Natural killer cell (primary cell): ENCODE measurements at regions of chr21 and their contacts with region 1.

Region 1: GRCh38 chr21:36330904-36331303 is 10.9 kb downstream of the MORC3 start:
- DNase-seq: peak; percentile 41 to 78
- ATAC-seq: peak; percentile 89 to 98 (median 92)
- H3K4me3 ChIP-seq: no peak overlapping the region
- H3K4me3 Mint-ChIP-seq: peak overlapping the region; percentile 47
- H3K27ac ChIP-seq: no peak overlapping the region
- H3K27ac Mint-ChIP-seq: peak overlapping the region; percentile 77 to 84
- H3K4me1 ChIP-seq: peaks cover 23% of the 10 kb centered on the region
- H3K4me1 Mint-ChIP-seq: peaks cover 33 to 43% of the 10 kb centered on the region in 2 donors
- H3K27me3 ChIP-seq: no peaks in the 10 kb centered on the region
- H3K27me3 Mint-ChIP-seq: no peaks in the 10 kb centered on the region
- CTCF ChIP-seq: peak; percentile 88

Region 2: GRCh38 chr21:36141513-36141925 is 189.4 kb before region 1 on chr21:
- intact Hi-C with region 1: loop called (anchors 1 kb)
- DNase-seq: peak; percentile 64 to 94
- ATAC-seq: peak; percentile 94 to 97 (median 95)
- H3K4me3 ChIP-seq: no peak overlapping the region
- H3K4me3 Mint-ChIP-seq: no peak overlapping the region
- H3K27ac ChIP-seq: no peak overlapping the region
- H3K27ac Mint-ChIP-seq: no peak overlapping the region
- H3K4me1 ChIP-seq: peaks cover 18% of the 10 kb centered on the region
- H3K4me1 Mint-ChIP-seq: peaks cover 5 to 8% of the 10 kb centered on the region in 2 donors
- H3K27me3 ChIP-seq: no peaks in the 10 kb centered on the region
- H3K27me3 Mint-ChIP-seq: no peaks in the 10 kb centered on the region
- CTCF ChIP-seq: peak; percentile 94

Region 3: DNA sequence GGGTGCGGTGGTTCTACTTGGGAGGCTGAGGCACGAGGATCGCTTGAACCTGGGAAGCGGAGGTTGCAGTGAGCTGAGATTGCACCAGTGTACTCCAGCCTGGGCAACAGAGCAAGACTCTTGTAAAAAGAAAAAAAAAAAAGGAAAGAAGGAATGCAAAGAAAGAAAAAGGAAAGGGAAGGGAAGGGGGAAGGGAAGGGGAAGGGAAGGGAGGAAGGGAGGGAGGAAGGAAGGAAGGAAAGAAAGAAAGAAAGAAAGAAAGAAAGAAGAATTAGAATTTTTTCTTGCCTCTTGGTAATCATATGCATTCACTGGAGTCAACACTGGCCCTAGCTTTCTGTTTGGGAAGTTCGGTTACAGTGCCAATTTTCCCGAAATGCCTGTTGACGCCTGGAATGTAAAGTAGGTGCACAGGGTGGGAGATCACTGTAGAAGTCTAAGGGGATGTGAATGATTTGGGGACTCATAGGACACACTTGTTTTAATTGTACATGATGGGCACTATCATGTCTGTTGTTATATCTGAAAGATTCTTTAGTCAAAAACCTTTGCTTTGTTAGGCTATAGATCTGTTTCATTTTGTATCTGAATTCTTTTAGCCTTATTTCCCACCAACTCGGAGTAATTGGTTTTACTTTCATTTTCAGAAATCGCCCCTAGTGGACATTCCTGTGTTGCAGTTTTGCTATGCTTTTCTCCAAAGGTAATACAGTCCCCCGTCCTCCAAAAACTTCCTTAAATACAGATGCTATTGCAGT is 70.7 kb before region 1 on chr21:
- intact Hi-C with region 1: loop called (anchors 1 kb)
- DNase-seq: peak in 1 of 2 donors; percentile 83
- ATAC-seq: peak; percentile 81 to 97 (median 93)
- H3K4me3 ChIP-seq: peak overlapping the region; percentile 43
- H3K4me3 Mint-ChIP-seq: peak overlapping the region; percentile 80
- H3K27ac ChIP-seq: peak overlapping the region; percentile 83
- H3K27ac Mint-ChIP-seq: peak overlapping the region; percentile 90 to 94
- H3K4me1 ChIP-seq: peaks cover 11% of the 10 kb centered on the region
- H3K4me1 Mint-ChIP-seq: peaks cover 12 to 13% of the 10 kb centered on the region in 2 donors
- H3K27me3 ChIP-seq: no peaks in the 10 kb centered on the region
- H3K27me3 Mint-ChIP-seq: no peaks in the 10 kb centered on the region
- CTCF ChIP-seq: peak; percentile 85

Region 4: DNA sequence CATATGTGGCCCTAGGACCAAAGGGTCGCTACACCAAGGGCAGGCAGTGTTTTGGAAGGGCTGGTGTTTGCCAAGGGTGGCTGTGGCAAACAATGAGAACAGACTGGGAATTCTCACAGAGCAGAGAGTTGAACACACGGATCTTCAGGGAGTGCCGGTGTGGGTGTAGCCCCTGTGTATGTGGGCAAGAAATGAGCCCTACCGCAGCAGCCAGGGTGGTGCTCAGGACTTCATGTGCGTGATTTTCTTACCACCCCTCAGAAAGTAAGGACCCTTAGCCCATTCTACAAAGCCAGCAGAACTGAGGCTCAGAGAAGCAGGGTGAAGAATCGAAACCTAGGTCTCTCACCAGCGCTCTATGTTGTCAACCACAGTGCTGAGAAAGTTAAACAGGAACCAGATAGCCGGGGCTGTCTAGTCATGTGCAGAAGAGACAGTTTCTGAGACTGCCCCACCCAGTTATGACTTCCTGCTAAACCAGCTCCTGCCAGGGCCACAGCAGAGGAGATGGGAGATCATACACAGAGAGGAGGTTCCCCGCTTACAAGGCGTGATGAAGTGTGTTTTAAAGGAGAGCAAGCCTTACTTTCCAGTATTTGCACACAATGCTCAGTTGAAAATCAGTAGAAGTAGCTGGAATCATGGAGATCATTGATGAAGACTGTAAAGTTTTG is 32.8 kb before region 1 on chr21:
- intact Hi-C with region 1: loop called (anchors 2 kb)
- DNase-seq: peak; percentile 64 to 91
- ATAC-seq: peak; percentile 96 to 99 (median 99)
- H3K4me3 ChIP-seq: peak overlapping the region; percentile 23
- H3K4me3 Mint-ChIP-seq: peak overlapping the region; percentile 77
- H3K27ac ChIP-seq: peak overlapping the region; percentile 89
- H3K27ac Mint-ChIP-seq: peak overlapping the region; percentile 96 to 99
- H3K4me1 ChIP-seq: peaks cover 38% of the 10 kb centered on the region
- H3K4me1 Mint-ChIP-seq: peaks cover 26 to 31% of the 10 kb centered on the region in 2 donors
- H3K27me3 ChIP-seq: no peaks in the 10 kb centered on the region
- H3K27me3 Mint-ChIP-seq: no peaks in the 10 kb centered on the region
- CTCF ChIP-seq: no peak

Region 5: GRCh38 chr21:36615274-36615964 is 284.5 kb after region 1 on chr21:
- intact Hi-C with region 1: no loop called
- DNase-seq: no peak
- ATAC-seq: no peak
- H3K4me3 ChIP-seq: no peak overlapping the region
- H3K4me3 Mint-ChIP-seq: no peak overlapping the region
- H3K27ac ChIP-seq: no peak overlapping the region
- H3K27ac Mint-ChIP-seq: no peak overlapping the region
- H3K4me1 ChIP-seq: no peaks in the 10 kb centered on the region
- H3K4me1 Mint-ChIP-seq: no peaks in the 10 kb centered on the region
- H3K27me3 ChIP-seq: no peaks in the 10 kb centered on the region
- H3K27me3 Mint-ChIP-seq: peaks cover 29 to 42% of the 10 kb centered on the region in 2 donors
- CTCF ChIP-seq: no peak